Activated CD8-positive, alpha-beta T cell treated with anti-CD3 and anti-CD28 coated beads, Interleukin-2, amount 10 ng/mL, durations not matched to agents 7 days and 5 days (primary cell): ENCODE measurements at regions of chr7 and their contacts with region 1.

Region 1: DNA sequence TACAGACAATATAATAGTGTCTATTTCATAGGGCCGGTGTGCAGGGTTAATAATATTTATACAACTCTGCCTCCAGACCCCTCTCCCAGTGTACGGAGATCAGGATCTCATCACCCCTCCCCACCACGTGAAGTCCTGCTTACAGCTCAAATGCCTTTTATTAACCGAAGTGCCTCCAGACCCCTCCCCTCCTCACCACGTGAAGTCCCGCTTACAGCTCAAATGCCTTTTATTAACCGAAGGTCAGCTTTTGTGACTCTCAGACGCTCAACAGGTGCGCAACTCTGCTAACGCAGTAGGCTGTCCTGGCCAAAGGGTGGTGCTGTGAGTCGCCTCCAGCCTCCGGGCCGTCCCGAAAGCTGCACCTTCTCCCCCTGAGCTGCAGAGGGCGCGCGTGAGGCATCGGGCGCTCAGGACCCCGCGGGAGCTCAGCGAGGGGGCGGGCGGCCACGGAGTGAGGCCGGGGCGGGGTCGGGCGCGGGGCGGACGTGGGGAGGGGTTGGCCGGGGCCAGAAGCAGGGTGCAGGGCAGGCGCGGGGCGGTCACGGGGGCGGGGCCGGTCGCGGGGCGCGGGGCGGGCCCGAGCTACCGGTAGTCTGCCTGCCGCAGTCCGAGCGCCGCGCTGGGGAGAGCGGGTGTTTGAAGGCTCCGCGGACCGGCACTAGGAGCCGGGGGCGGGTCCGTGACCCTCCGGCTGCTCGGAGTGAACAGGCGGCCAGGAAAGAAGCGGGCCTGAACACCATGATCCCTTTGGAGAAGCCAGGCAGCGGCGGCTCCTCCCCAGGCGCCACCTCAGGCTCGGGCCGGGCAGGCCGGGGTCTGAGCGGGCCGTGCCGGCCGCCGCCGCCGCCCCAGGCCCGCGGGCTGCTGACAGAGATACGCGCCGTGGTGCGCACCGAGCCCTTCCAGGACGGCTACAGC is at the start of gene STK17A:
- DNase-seq: peak; percentile 94
- ATAC-seq: peak; percentile 77
- H3K4me3 Mint-ChIP-seq: peak within 1 kb of the TSS; percentile 97
- H3K27ac Mint-ChIP-seq: peak within 1 kb of the TSS; percentile 99
- H3K4me1 Mint-ChIP-seq: peaks cover 31% of the 10 kb centered on the region
- H3K27me3 Mint-ChIP-seq: peaks cover 18% of the 10 kb centered on the region
- total RNA-seq, gene STK17A: 67.9 to 69.0 TPM

Region 2: GRCh38 chr7:42931834-42932651 is 650.7 kb before region 1 on chr7 and contains the starts of genes MRPL32 and PSMA2:
- CTCF ChIA-PET with region 1: interaction called, 9 read pairs
- POLR2A ChIA-PET with region 1: interaction called, 10 read pairs
- DNase-seq: peak; percentile 97
- ATAC-seq: peak; percentile 100
- H3K4me3 Mint-ChIP-seq: peak within 1 kb of the TSS; percentile 100
- H3K27ac Mint-ChIP-seq: peak within 1 kb of the TSS; percentile 98
- H3K4me1 Mint-ChIP-seq: peaks cover 59% of the 10 kb centered on the region
- H3K27me3 Mint-ChIP-seq: no peaks in the 10 kb centered on the region
- total RNA-seq, gene MRPL32: 38.7 to 41.6 TPM
- total RNA-seq, gene PSMA2: 131 to 154 TPM

Region 3: GRCh38 chr7:43516581-43517342 is 66.0 kb before region 1 on chr7:
- CTCF ChIA-PET with region 1: interaction called, 11 read pairs
- POLR2A ChIA-PET with region 1: interaction called, 7 read pairs
- DNase-seq: no peak
- ATAC-seq: no peak
- H3K4me3 Mint-ChIP-seq: no peak overlapping the region
- H3K27ac Mint-ChIP-seq: no peak overlapping the region
- H3K4me1 Mint-ChIP-seq: peaks cover 7% of the 10 kb centered on the region
- H3K27me3 Mint-ChIP-seq: peaks cover 19% of the 10 kb centered on the region

Region 4: DNA sequence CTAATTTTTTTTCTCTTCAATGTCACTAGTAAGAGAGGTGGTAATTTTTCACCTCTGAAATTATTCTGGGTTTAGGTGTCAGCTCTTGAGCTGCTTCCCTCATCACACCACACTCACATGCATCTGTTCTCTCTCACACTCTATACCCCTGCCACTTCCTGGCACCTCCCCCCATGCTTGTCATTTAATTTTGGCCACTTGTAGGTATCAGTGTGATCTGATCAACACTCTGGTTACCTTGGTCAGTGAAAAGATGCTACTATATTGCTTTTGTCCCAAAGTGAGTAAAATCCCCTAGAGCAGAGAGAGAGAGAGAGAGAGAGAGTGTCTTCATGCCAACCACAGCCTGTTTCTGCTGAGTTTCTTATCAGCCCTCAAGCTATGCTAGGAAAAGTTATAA is 42.7 kb after region 1 on chr7:
- CTCF ChIA-PET with region 1: interaction called, 160 read pairs
- POLR2A ChIA-PET with region 1: interaction called, 22 read pairs
- DNase-seq: peak; percentile 75
- ATAC-seq: peak; percentile 81
- H3K4me3 Mint-ChIP-seq: peak overlapping the region; percentile 22
- H3K27ac Mint-ChIP-seq: peak overlapping the region; percentile 73
- H3K4me1 Mint-ChIP-seq: peaks cover 84% of the 10 kb centered on the region
- H3K27me3 Mint-ChIP-seq: no peaks in the 10 kb centered on the region

Region 5: DNA sequence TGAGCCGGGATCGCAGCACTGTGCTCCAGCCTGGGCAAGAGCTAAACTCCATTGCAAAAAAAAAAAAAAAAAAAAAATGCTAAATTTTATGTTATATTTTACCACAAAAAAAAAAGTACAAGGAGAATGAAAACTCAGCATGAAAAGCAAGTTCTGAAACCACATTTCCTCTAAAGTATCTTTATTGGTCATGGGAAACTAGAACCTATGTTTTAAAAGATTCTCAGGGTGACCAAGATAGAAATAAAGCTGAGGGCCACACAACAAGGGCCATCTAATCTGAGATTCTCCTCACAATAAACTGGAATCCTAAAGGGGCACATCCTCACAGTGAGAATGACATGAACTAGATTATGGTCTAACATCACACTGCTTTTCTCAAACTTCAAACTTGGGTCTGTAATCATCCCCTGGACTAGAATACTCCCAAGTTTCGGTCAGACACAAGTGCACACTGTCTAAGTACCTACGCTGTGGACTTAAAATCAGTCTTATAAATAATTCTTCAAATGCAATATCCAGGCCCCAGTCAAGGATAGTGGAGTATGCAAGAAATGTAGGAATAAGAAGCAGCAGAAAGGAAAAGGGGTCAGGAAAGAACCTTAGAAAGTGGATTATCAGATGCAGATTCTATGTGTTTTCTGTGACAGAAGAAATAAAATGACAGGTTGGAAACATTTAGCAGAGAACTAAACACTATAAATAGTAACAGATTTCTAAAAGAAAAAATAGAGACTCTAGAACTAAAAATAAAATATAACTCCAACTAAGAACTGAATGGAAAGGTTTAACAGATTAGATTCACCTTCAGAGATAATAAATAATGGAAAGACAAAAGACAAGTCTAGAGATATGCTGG is 96.7 kb after region 1 on chr7:
- CTCF ChIA-PET with region 1: interaction called, 10 read pairs
- POLR2A ChIA-PET with region 1: interaction called, 5 read pairs
- DNase-seq: no peak
- ATAC-seq: peak; percentile 39
- H3K4me3 Mint-ChIP-seq: no peak overlapping the region
- H3K27ac Mint-ChIP-seq: peak overlapping the region; percentile 33
- H3K4me1 Mint-ChIP-seq: peaks cover 37% of the 10 kb centered on the region
- H3K27me3 Mint-ChIP-seq: no peaks in the 10 kb centered on the region

Region 6: DNA sequence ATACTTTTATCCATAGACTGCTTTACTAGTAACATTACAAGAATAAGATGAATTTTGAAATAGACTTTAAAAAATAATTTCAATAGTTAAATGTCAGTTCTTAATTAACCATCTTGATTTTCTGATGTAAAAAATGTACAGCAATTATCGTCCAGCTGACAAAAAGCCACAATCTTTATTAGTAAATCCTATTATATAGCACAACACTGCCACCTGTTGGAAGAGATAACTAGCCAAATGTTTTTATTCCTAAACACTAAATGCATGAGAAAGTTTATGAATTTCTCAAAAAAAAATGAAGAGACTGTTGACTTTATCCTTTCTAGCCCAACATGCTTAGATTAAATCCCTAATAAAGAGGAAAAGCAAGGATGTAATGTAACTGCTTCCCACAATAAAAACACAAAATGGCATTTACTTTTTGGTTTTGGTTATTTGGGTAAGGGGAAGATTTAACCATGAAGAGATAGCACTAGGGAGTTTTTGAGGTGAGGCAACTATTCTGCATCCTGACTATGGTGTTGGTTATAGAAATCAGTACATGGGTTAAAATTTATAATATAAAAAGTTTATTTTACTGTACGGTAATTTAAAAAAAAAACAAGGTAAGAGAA is 138.5 kb after region 1 on chr7:
- CTCF ChIA-PET with region 1: interaction called, 154 read pairs
- POLR2A ChIA-PET with region 1: interaction called, 15 read pairs
- DNase-seq: no peak
- ATAC-seq: no peak
- H3K4me3 Mint-ChIP-seq: no peak overlapping the region
- H3K27ac Mint-ChIP-seq: no peak overlapping the region
- H3K4me1 Mint-ChIP-seq: peaks cover 39% of the 10 kb centered on the region
- H3K27me3 Mint-ChIP-seq: no peaks in the 10 kb centered on the region

Region 7: GRCh38 chr7:43847496-43847895 is 264.7 kb after region 1 on chr7:
- CTCF ChIA-PET with region 1: interaction called, 17 read pairs
- POLR2A ChIA-PET with region 1: interaction called, 4 read pairs
- DNase-seq: no peak
- ATAC-seq: no peak
- H3K4me3 Mint-ChIP-seq: no peak overlapping the region
- H3K27ac Mint-ChIP-seq: no peak overlapping the region
- H3K4me1 Mint-ChIP-seq: peaks cover 7% of the 10 kb centered on the region
- H3K27me3 Mint-ChIP-seq: peaks cover 8% of the 10 kb centered on the region